Activated CD4-positive, alpha-beta T cell treated with anti-CD3 and anti-CD28 coated beads, Interleukin-2, amount 10 ng/mL, durations not matched to agents 24 days and 14 days (primary cell): ENCODE measurements at regions of chr13 and their contacts with region 1.

Region 1: GRCh38 chr13:27251166-27252091 is at the start of gene RPL21:
- DNase-seq: peak; percentile 97
- H3K4me3 Mint-ChIP-seq: peak within 1 kb of the TSS; percentile 100
- H3K27ac Mint-ChIP-seq: peak within 1 kb of the TSS; percentile 99
- H3K4me1 Mint-ChIP-seq: peaks cover 30% of the 10 kb centered on the region
- H3K27me3 Mint-ChIP-seq: no peaks in the 10 kb centered on the region
- total RNA-seq, gene RPL21: 1,100 and 1,185 TPM in 2 replicates

Region 2: GRCh38 chr13:26985285-26985878 is 266.0 kb before region 1 on chr13:
- intact Hi-C with region 1: loop called (anchors 5 kb)
- DNase-seq: peak; percentile 92
- H3K4me3 Mint-ChIP-seq: no peak overlapping the region
- H3K27ac Mint-ChIP-seq: no peak overlapping the region
- H3K4me1 Mint-ChIP-seq: peaks cover 9% of the 10 kb centered on the region
- H3K27me3 Mint-ChIP-seq: peaks cover 4% of the 10 kb centered on the region

Region 3: DNA sequence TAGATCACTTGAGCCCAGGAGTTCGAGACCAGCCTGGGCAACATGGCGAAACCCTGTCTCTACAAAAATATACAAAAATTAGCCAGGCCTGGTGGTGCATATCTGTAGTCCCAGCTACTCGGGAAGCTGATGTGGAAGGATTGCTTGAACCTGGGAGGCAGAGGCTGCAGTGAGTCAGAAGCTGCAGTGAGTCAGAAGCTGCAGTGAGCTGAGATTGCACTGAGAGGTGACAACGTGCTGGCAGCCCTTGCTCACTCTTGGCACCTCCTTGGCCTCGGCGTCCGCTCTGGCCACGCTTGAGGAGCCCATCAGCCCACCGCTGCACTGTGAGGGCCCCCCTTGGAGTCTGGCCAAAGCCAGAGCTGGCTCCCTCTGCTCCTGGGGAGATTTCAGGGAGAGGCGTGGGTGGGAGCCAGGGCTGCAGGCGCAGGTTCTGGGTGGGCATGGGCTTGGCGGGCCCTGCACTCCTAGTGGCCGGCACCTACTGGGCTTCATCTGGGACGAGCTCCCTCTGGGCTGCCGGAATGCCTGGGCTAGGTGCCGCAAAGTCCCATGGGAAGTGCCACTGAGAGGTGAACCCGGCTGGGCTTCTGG is 39.6 kb before region 1 on chr13:
- intact Hi-C with region 1: no loop called
- DNase-seq: no peak
- H3K4me3 Mint-ChIP-seq: no peak overlapping the region
- H3K27ac Mint-ChIP-seq: no peak overlapping the region
- H3K4me1 Mint-ChIP-seq: peaks cover 6% of the 10 kb centered on the region
- H3K27me3 Mint-ChIP-seq: peaks cover 2% of the 10 kb centered on the region

Region 4: GRCh38 chr13:27270594-27271520 is 19.4 kb after region 1 on chr13 and contains the start of gene RASL11A:
- intact Hi-C with region 1: loop called (anchors 1 kb)
- DNase-seq: peak; percentile 93
- H3K4me3 Mint-ChIP-seq: peak within 1 kb of the TSS; percentile 90
- H3K27ac Mint-ChIP-seq: no peak within 1 kb of the TSS
- H3K4me1 Mint-ChIP-seq: peaks cover 11% of the 10 kb centered on the region
- H3K27me3 Mint-ChIP-seq: peaks cover 35% of the 10 kb centered on the region
- total RNA-seq, gene RASL11A: 1.8 and 2.8 TPM in 2 replicates

Region 5: DNA sequence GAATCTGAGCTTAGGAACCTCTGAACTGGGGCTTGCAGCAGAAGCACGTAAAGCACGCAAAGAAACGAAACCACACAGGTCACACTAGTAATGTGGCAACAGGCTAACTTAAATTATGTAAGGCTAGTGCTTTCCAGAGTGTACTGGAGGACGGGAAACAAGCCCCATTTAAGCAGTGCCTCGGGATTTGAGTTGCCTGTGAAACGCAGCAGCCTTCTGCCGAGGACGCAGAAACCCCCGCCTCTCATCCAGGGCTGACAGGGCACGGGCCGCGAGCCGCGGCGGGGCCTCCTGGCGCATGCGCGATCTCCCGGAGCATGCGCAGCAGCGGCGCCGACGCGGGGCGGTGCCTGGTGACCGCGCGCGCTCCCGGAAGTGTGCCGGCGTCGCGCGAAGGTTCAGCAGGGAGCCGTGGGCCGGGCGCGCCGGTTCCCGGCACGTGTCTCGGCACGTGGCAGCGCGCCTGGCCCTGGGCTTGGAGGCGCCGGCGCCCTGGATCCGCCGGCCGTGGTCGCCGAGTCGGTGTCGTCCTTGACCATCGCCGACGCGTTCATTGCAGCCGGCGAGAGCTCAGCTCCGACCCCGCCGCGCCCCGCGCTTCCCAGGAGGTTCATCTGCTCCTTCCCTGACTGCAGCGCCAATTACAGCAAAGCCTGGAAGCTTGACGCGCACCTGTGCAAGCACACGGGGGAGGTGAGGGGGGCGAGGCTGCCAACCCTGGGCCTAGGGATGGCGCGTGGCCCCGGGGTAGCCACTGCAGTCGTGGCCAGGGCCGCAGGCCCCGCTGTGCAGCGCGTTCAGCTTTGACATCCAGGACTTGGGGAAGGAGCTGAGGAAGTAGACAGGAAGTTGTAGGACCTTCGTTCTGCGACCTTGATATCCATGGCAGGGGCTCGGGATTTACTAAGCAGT is 173.1 kb after region 1 on chr13 and contains the start of gene GTF3A:
- intact Hi-C with region 1: loop called (anchors 2 kb)
- DNase-seq: peak; percentile 97
- H3K4me3 Mint-ChIP-seq: peak within 1 kb of the TSS; percentile 86
- H3K27ac Mint-ChIP-seq: peak within 1 kb of the TSS; percentile 95
- H3K4me1 Mint-ChIP-seq: peaks cover 35% of the 10 kb centered on the region
- H3K27me3 Mint-ChIP-seq: no peaks in the 10 kb centered on the region
- total RNA-seq, gene GTF3A: 279 and 284 TPM in 2 replicates

Region 6: DNA sequence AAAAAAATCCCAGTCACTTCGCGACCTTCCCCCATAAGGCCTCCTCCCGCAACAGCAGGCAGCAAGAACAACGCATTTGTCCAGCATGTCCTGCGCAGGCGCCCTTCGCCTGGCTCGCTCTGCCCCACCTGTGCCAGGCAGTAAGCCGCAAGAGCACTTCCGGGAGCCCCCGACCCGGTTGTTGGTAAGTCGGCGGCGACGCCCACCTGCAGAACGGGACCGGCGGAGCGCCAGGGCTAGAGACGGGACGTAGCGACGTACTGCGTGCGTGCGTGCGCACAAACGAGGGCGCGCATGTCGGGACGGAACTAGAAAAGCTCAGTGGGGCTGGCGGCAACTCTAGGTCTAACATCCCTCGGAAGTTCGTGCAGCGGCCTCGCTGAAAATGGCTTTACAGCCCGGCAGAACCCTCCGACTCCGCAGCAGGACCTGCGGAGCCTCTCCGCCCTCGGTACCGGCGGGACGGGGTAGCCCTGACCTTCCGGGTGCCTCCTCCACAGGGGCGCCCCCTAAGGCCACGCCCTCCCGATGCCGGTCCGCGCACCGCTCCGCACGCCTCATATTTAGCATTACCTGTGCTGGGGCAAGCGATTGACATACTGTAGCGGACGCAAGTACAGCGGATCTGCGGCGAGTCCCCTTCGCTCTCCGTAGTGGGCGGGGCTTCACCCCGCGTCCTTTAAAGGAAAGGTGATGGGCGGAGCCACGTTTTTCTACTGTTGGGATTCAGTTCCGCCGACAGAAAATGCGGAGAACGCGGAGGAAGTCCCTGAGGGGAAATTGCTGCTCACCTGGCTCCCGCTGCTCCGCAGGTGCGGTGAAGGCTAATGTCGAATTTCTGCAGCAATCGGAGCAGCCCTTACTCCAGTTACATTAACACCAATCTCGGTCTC is 198.8 kb after region 1 on chr13 and contains the start of gene MTIF3:
- intact Hi-C with region 1: loop called (anchors 2 kb)
- DNase-seq: peak; percentile 99
- H3K4me3 Mint-ChIP-seq: peak within 1 kb of the TSS; percentile 88
- H3K27ac Mint-ChIP-seq: peak within 1 kb of the TSS; percentile 96
- H3K4me1 Mint-ChIP-seq: peaks cover 43% of the 10 kb centered on the region
- H3K27me3 Mint-ChIP-seq: no peaks in the 10 kb centered on the region
- total RNA-seq, gene MTIF3: 28.8 and 30.4 TPM in 2 replicates

Region 7: DNA sequence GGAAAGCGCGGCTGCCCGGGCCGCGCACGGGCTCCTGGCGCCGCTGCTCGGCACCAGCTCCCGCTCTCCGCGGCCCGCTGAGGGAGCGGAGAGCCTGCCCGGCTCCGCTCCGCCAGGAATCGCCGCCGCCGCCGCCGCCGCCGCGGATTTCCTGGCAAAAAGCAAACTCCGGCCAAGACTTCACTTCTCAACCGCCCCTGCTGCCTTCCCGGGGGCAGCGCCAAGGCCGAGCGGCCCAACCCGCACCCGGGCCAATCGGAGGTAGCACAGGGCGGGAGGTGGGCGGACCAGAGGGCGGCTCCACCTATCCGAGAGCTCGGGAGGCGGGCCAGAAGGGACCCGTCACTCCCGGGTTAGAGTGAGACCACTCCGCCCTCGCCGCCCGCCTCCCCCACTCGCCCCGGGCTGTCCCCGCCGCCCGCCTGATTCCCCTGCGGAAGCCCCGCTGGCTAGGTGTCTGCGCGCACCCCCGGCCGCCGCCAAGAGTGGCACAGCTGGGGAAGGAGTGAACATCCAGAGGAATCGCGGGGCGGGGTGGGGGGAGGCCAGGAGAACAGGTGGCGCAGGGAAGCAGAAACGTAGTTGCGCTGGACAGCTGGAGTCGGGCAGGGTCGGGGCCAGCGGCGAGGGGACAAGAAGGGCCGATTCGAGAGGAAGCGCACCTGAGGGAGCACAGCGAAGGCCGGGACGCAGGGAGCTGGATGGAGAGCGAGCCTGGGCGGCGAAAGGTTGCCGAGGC is 369.1 kb after region 1 on chr13 and contains the start of gene LNX2:
- intact Hi-C with region 1: loop called (anchors 1 kb)
- DNase-seq: peak; percentile 99
- H3K4me3 Mint-ChIP-seq: peak within 1 kb of the TSS; percentile 98
- H3K27ac Mint-ChIP-seq: peak within 1 kb of the TSS; percentile 93
- H3K4me1 Mint-ChIP-seq: peaks cover 44% of the 10 kb centered on the region
- H3K27me3 Mint-ChIP-seq: no peaks in the 10 kb centered on the region
- total RNA-seq, gene LNX2: 4.1 and 4.3 TPM in 2 replicates